Activated naive CD4-positive, alpha-beta T cell treated with anti-CD3 and anti-CD28 coated beads for 36 hours (primary cell): ENCODE measurements at regions of chr6 and their contacts with region 1.

Region 1: GRCh38 chr6:133916650-133917151 is 27.8 kb downstream of the TCF21 start:
- DNase-seq: peak; percentile 89
- H3K4me3 Mint-ChIP-seq: no peak overlapping the region
- H3K27ac Mint-ChIP-seq: no peak overlapping the region
- H3K4me1 Mint-ChIP-seq: peaks cover 4% of the 10 kb centered on the region
- H3K27me3 Mint-ChIP-seq: peaks cover 9% of the 10 kb centered on the region

Region 2: GRCh38 chr6:132820629-132821381 is 1095.9 kb before region 1 on chr6:
- CTCF ChIA-PET with region 1: no interaction called
- intact Hi-C with region 1: loop called (anchors 5 kb)
- DNase-seq: no peak
- H3K4me3 Mint-ChIP-seq: no peak overlapping the region
- H3K27ac Mint-ChIP-seq: peak overlapping the region; percentile 72
- H3K4me1 Mint-ChIP-seq: peaks cover 42% of the 10 kb centered on the region
- H3K27me3 Mint-ChIP-seq: no peaks in the 10 kb centered on the region

Region 3: DNA sequence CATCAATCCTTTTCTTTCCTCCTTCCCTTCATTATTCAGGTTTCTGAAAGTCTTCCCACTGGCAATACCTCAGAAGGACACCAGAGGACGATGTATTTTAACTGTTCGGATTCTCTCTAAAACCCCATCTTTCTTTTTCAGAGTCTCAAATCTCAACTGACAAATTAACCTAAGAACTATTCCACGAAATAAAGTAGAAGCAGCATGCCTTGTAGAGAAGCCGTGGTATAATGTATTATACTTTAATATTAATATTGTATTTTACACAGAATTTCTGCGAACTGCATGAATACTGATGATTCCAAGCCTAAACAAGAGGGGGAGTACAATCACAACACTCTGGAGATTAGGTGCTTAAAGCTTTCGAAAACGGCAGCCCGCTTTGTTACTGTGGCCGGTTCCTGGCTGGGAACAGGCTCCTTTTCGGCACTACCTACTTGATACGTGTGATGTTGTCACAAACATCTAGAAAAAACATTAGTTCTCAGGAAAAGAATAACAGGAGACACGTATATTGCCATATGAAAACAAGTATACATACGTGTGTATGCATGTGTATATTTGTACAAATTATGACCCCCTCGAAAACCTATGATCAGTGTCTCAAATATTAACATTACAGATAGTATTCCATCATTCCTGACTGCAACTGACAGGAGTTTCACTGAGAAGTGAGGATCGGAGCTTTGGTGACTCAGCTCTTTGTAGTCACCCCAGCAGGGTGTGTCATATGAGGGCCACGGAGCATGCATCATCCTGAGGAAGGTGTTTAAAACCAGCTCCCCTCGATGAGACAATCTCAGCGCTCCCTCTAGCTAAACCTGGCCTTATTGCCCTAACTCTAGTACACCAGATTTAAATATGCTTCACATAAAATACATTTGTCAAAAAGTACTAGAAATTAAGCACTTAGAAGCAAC is 347.5 kb before region 1 on chr6:
- CTCF ChIA-PET with region 1: interaction called, 17 read pairs
- intact Hi-C with region 1: loop called (anchors 1 kb)
- DNase-seq: peak; percentile 51
- H3K4me3 Mint-ChIP-seq: no peak overlapping the region
- H3K27ac Mint-ChIP-seq: no peak overlapping the region
- H3K4me1 Mint-ChIP-seq: peaks cover 8% of the 10 kb centered on the region
- H3K27me3 Mint-ChIP-seq: peaks cover 36% of the 10 kb centered on the region

Region 4: GRCh38 chr6:133891149-133891926 is 25.4 kb before region 1 on chr6:
- CTCF ChIA-PET with region 1: interaction called, 12 read pairs
- intact Hi-C with region 1: no loop called
- DNase-seq: peak; percentile 12
- H3K4me3 Mint-ChIP-seq: peak overlapping the region; percentile 68
- H3K27ac Mint-ChIP-seq: no peak overlapping the region
- H3K4me1 Mint-ChIP-seq: peaks cover 43% of the 10 kb centered on the region
- H3K27me3 Mint-ChIP-seq: peaks cover 87% of the 10 kb centered on the region

Region 5: GRCh38 chr6:134097114-134097707 is 180.5 kb after region 1 on chr6:
- CTCF ChIA-PET with region 1: interaction called, 205 read pairs
- intact Hi-C with region 1: no loop called
- DNase-seq: peak; percentile 80
- H3K4me3 Mint-ChIP-seq: no peak overlapping the region
- H3K27ac Mint-ChIP-seq: no peak overlapping the region
- H3K4me1 Mint-ChIP-seq: no peaks in the 10 kb centered on the region
- H3K27me3 Mint-ChIP-seq: peaks cover 7% of the 10 kb centered on the region

Region 6: DNA sequence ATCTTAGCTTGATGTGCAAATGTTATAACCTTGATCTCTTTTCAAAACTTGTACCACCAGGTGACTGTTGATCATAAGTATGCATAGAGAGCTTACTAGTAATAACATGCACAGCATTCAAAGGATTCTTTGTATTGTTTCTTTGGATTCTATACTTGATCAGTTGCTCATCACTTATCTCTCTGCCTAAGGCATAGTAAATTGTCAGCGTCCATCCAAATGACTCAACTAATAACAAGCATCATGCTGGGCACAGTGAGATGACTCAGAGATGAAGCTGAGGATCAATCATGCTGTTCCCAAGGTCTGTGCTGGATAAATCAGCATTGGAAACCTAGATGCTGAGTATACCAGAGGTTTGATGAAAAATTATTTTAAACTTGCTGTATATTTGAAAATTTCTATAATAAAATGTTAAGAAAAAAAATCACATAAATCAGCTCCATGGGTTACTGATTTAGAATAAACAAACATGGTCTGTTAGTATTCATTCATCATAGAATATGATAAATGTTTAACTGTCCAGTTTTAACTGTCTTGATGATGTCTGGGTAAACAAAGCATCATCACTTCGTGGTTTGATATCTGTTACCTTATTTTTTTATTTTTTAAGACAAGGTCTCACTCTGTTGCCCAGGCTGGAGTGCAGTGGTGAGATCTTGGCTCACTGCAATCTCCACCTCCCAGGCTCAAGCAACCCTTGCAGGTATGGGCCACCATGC is 446.8 kb after region 1 on chr6:
- CTCF ChIA-PET with region 1: no interaction called
- intact Hi-C with region 1: no loop called
- DNase-seq: no peak
- H3K4me3 Mint-ChIP-seq: no peak overlapping the region
- H3K27ac Mint-ChIP-seq: no peak overlapping the region
- H3K4me1 Mint-ChIP-seq: peaks cover 1% of the 10 kb centered on the region
- H3K27me3 Mint-ChIP-seq: no peaks in the 10 kb centered on the region